Common myeloid progenitor, CD34-positive (primary cell): ENCODE measurements at regions of chr15 and their contacts with region 1.

Region 1: GRCh38 chr15:68820295-68821189 is at the start of gene ANP32A:
- DNase-seq: peak; percentile 94 to 96 (median 95)
- H3K4me3 ChIP-seq: peak within 1 kb of the TSS; percentile 93 to 99 (median 97)
- H3K27ac ChIP-seq: peak within 1 kb of the TSS; percentile 94 to 98
- H3K4me1 ChIP-seq: peaks cover 17 to 34% (median 25%) of the 10 kb centered on the region in 4 experiments
- H3K27me3 ChIP-seq: no peaks in the 10 kb centered on the region

Region 2: GRCh38 chr15:68783226-68784058 is 37.1 kb before region 1 on chr15:
- CTCF ChIA-PET with region 1: interaction called, 63 read pairs
- POLR2A ChIA-PET with region 1: interaction called, 31 read pairs
- DNase-seq: peak; percentile 56 to 67 (median 66)
- H3K4me3 ChIP-seq: peak overlapping the region in 2 of 7 experiments; percentile 1 to 35
- H3K27ac ChIP-seq: peak overlapping the region; percentile 18 to 75
- H3K4me1 ChIP-seq: peaks cover 20 to 79% (median 73%) of the 10 kb centered on the region in 4 experiments
- H3K27me3 ChIP-seq: no peaks in the 10 kb centered on the region

Region 3: GRCh38 chr15:68789534-68790241 is 30.9 kb before region 1 on chr15:
- CTCF ChIA-PET with region 1: interaction called, 63 read pairs
- POLR2A ChIA-PET with region 1: interaction called, 31 read pairs
- DNase-seq: peak in 1 of 3 donors; percentile 25
- H3K4me3 ChIP-seq: peak overlapping the region in 2 of 7 experiments; percentile 7 to 29
- H3K27ac ChIP-seq: peak overlapping the region; percentile 69 to 78
- H3K4me1 ChIP-seq: peaks cover 43 to 95% (median 89%) of the 10 kb centered on the region in 4 experiments
- H3K27me3 ChIP-seq: no peaks in the 10 kb centered on the region

Region 4: DNA sequence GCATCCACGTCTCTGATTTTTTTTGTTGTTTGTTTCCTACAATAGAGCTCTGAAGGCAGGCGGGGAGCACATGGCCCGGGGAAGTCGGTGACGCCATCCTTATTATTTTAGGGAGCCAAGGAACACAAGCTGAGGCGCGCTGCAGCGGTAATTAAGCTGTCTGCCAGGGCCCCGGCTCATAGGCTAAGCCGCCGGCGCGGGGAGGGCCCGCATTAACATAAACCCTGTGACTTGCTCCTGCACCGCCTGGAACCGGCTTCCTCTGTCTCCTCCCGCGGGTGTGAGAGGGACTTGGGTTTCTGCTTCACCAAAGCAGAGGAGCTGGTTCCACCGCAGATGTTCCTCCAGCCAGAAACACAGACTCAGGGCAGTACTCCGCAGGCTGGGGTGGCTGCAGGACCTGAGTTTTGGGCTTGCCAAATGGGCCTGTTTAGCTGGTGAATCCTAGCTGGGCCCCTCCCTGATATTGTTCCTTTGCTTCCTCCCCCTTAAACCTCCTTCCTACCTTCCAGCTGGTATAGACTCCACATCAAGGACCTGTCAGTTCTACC is 25.2 kb before region 1 on chr15:
- CTCF ChIA-PET with region 1: interaction called, 24 read pairs
- POLR2A ChIA-PET with region 1: interaction called, 31 read pairs
- DNase-seq: peak in 2 of 3 donors; percentile 87 to 88
- H3K4me3 ChIP-seq: peak overlapping the region in 6 of 7 experiments; percentile 1 to 60 (median 35)
- H3K27ac ChIP-seq: peak overlapping the region in 1 of 2 experiments; percentile 60
- H3K4me1 ChIP-seq: peaks cover 29 to 93% (median 73%) of the 10 kb centered on the region in 4 experiments
- H3K27me3 ChIP-seq: no peaks in the 10 kb centered on the region

Region 5: DNA sequence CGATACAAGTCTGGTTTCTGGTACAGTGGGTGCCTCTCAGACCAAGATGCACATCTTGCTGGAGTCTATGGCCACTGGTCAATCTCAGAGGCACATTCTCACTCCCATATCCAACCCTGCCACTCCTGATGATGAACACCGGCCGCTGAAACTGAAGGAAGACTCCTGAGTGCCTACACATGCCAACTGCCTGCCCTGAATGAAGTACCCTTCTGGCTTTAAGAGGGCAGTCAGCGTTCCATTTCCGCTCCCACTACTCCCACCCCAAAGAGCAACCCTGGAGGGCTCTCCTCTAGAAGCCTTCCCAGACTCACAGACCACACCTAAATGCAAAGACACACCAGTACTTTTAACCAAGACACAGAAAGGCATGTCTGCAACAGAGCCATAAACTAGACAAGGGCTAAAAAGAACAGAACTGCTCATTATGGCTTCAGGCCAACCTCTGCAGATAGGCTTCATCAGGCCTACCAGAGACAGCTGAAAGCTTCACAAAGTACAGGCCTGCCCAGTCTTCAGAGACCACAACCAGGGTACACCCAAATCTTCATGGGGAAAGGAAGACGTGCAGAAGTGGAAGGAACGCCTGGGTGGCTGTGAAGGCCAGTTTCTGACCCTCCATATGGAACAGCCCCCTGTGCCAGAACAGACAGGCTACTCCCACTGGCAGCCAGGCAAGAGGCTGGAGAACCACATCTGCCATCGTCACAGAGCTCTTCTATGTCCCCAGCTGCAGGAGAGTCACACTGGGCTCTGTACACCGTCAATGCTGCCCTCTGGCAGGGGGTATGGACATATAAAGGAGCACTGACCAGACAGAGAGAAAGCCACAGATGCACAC is 14.1 kb before region 1 on chr15:
- CTCF ChIA-PET with region 1: interaction called, 12 read pairs
- POLR2A ChIA-PET with region 1: interaction called, 5 read pairs
- DNase-seq: no peak
- H3K4me3 ChIP-seq: no peak overlapping the region
- H3K27ac ChIP-seq: no peak overlapping the region
- H3K4me1 ChIP-seq: peaks cover 0 to 9% (median 3%) of the 10 kb centered on the region in 4 experiments
- H3K27me3 ChIP-seq: no peaks in the 10 kb centered on the region